ENCODE measurements at regions of chr17 and their contacts with region 1.

Region 1: DNA sequence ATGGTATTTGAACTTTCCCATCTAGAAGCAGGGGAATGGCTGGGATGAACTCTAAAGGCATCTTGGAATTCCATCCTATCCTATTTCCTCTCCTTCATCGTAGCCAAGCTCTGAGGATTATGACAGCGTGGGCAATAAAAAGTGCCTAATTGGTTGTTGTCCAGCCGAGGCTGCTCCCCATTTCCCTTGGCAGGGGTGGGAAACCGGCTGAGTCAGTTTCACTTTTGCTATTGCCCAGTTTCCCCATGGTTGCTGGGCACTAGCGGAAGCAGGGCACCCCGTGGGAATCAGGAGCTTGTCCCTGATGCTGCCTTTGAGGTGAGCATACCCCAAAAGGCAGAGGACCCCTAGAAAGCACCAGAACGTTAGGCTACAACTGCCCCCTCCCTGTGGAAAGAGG is 13.8 kb upstream of the SP2 start:
- DNase-seq: no peak
- H3K4me3 ChIP-seq: no peak overlapping the region
- CTCF ChIP-seq: no peak

Region 2: DNA sequence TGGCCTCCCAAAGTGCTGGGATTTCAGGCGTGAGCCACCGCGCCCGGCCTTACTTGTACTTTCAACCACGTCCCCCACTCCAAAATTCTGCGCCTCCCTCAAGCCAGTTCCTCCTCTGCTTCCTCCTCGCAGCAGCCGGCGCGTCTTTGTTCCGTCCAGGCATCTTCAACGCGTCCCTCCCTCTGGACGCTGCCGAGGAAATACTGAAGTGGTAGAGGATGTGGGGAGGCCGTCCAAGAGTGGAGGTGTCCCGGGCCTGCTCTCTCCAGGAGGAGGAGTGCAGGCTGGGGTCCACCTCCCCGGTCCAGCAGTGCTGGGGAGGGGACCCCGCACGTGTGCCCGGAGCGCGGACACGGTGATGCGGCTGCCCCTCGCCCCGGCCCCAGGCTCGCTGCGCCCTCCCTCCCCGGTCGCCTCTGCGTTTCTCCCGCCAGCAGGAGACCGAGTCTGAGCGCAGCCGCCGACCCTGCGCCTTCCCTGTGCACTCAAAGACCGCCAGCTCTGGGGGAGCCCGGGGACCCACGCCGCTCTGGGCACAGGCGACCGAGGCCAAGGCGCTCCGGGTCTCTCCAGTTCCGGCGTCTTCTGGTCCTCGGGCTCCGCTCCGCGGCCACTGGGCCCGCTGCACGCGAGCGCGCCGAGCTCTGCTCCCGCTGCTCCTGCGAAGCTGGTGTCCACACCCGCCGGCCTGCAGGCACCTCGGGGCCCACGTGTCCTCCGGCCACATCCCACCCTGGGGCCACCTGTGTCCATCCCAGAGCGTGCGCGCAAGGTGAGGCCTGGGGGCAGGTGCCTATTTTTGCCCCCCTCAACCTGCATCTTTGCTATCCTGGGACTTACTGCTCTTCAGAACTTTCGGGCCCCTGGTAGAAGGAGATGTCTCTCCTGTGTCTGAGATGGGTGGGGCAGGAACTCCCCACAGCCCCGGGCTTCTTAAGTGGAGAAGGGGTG is 92.4 kb before region 1 on chr17:
- CTCF ChIA-PET with region 1: no interaction called
- POLR2A ChIA-PET with region 1: no interaction called
- DNase-seq: no peak
- H3K4me3 ChIP-seq: peak overlapping the region; percentile 40
- CTCF ChIP-seq: peak; percentile 63

Region 3: GRCh38 chr17:47895856-47896671 is 13.8 kb after region 1 on chr17 and contains the start of gene SP2:
- CTCF ChIA-PET with region 1: interaction called, 85 read pairs
- POLR2A ChIA-PET with region 1: interaction called, 6 read pairs
- DNase-seq: peak; percentile 100
- H3K4me3 ChIP-seq: peak within 1 kb of the TSS; percentile 96
- CTCF ChIP-seq: peak; percentile 10

Measured in AG04449 (cell line).